Caco-2 (cell line): ENCODE measurements at regions of chr3 and their contacts with region 1.

Region 1: DNA sequence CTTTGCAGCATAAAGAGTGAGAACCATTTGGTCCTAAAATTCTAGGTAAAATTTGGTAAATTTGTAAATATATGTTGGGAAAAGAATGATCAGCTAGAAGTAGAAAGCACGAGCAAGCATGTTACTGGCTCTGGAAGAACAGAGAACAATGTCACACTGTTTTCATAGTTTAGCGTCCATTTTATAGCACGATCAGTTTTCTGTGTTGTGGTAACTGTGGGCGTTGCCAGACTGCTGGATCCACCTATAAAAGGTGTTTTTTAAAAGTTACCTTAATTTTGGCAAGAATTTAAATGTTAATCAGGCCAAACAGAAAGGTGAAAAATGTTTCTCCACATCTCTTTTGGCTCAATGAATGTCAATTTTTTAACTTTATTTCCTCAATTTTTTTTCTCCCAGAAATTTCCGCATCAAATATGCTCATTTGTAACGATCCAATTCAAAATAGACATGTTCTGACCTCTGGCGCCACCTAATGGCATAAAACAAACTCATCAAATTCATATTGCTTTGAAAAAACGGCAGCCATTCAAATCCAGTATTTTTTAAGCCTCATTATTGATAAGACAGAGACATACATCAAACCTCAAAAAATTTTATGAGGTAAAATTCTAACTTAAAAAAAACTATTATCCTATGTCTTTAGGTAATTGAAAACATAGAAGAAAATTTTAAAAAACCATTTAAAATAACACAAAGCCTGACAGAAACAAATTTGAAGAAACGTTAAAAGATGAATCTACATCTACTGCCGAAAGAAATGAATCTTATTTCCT is 5.5 kb upstream of the GP5 start:
- DNase-seq: peak in 1 of 2 experiments; percentile 65
- H3K4me3 ChIP-seq: no peak overlapping the region
- H3K4me3 Mint-ChIP-seq: no peak overlapping the region
- H3K27ac Mint-ChIP-seq: no peak overlapping the region
- H3K4me1 ChIP-seq: no peaks in the 10 kb centered on the region
- H3K4me1 Mint-ChIP-seq: no peaks in the 10 kb centered on the region
- H3K27me3 ChIP-seq: no peaks in the 10 kb centered on the region
- H3K27me3 Mint-ChIP-seq: no peaks in the 10 kb centered on the region
- CTCF ChIP-seq: peak; percentile 57 to 71

Region 2: GRCh38 chr3:194058189-194058571 is 346.4 kb before region 1 on chr3:
- CTCF ChIA-PET with region 1: no interaction called
- POLR2A ChIA-PET with region 1: no interaction called
- intact Hi-C with region 1: no loop called
- DNase-seq: peak; percentile 83 to 87
- H3K4me3 ChIP-seq: peak overlapping the region; percentile 28
- H3K4me3 Mint-ChIP-seq: peak overlapping the region; percentile 75
- H3K27ac Mint-ChIP-seq: peak overlapping the region; percentile 47
- H3K4me1 ChIP-seq: peaks cover 54% of the 10 kb centered on the region
- H3K4me1 Mint-ChIP-seq: peaks cover 36% of the 10 kb centered on the region
- H3K27me3 ChIP-seq: no peaks in the 10 kb centered on the region
- H3K27me3 Mint-ChIP-seq: no peaks in the 10 kb centered on the region
- CTCF ChIP-seq: no peak

Region 3: DNA sequence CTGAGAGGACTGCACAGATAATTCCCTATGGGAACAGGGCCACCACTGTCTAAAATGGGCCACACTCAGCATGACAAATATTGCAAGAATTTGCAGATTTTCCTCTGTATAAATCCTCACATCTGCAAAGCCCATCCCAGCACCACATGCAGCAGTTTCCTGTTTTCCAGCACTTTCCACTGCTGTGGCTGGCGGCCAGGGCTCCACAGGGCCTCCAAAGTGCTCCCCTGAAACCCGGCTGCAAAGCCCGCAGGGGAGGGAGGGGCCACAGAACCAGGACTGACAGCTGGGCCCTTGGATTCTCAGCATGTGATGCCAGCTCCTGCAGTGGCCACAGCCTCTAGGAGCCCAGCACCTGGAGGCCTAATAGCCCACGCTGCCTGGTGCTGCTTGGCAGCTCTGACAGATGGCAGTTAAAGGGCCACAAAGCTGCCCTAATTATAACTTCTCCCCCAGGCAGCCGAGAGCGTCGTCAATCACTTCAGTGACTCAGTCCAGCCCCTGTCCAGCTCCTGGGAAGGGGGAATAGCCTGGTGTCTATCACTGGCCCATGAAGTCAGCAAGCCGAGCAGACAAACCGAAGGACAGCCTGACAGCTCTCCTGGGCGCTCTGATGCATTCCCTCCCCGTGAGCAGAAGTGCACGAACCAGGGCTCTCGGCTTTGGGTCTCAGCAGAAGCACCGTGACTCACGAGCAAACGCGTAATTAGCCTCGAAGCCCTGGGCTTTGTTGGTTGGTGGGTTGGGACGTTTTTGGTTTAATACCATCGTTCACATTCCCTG is 39.7 kb before region 1 on chr3:
- CTCF ChIA-PET with region 1: interaction called, 5 read pairs
- POLR2A ChIA-PET with region 1: no interaction called
- intact Hi-C with region 1: loop called (anchors 5 kb)
- DNase-seq: no peak
- H3K4me3 ChIP-seq: no peak overlapping the region
- H3K4me3 Mint-ChIP-seq: no peak overlapping the region
- H3K27ac Mint-ChIP-seq: no peak overlapping the region
- H3K4me1 ChIP-seq: peaks cover 7% of the 10 kb centered on the region; the same call in 1 of the 2 replicates
- H3K4me1 Mint-ChIP-seq: peaks cover 2% of the 10 kb centered on the region
- H3K27me3 ChIP-seq: no peaks in the 10 kb centered on the region
- H3K27me3 Mint-ChIP-seq: no peaks in the 10 kb centered on the region
- CTCF ChIP-seq: no peak